Transverse colon (tissue), 4 donors: ENCODE measurements at regions of chr4 and their contacts with region 1.

Region 1: DNA sequence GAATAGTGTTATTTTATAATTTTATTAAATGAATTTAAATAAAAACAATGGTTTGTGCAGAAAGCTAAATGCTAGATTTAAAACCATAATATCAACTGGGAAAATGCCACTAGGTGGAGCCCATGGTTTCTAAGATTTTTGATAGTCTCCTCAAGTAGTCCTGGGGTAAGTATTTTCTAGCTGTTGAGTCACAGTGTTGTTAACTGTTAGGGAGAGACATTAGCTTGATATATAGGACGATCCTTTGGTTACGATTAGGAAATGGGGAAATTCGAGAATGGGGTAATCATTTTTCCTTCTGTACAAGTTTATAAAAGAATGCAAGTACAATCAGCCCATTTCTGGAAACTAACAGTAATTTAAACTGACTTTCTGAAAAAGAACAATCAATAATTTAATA is 378.4 kb downstream of the ANKRD50 start:
- DNase-seq: no peak
- H3K4me3 ChIP-seq: no peak overlapping the region
- H3K27ac ChIP-seq: no peak overlapping the region
- H3K4me1 ChIP-seq: peaks cover 0 to 3% (median 2%) of the 10 kb centered on the region in 4 donors
- H3K27me3 ChIP-seq: no peaks in the 10 kb centered on the region
- CTCF ChIP-seq: peak; percentile 49 to 58 (median 56)
- EP300 ChIP-seq: no peak
- POLR2A ChIP-seq: no peak

Region 2: DNA sequence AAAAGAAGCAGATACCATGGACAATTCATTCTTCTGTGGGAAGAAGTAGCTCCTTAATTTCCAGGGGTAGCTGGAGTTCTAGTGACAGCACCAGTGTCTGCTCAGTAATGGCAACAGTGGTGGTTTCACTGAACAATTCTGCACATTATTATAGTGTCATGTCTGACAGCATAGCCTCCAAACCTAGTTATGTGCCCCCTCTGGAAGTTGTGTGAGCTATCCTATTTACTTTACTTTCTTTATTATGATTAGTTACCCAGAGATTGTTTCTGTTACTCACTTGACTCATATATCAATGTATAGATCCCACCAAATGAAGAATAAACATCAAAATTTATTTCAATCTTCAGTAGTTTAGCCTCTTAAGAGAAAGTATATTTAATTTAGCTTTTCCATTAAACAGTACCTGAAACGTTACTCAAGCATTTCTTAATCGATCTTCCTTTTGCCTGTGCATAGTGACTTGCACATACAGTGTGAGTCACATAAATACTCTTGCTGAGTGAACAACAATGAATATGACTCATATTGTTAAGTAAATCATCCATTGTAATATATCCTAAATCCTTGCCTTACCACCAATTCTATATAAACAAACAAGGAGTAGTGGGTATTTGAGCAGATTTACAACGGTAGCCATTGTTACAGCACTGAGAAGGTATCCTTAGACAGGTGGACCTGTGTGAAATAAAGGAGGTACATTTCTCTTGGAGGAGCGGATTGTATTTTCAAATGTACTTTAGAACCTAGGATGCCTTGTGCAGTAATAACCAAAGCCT is 156.3 kb before region 1 on chr4:
- in situ Hi-C with region 1: no loop called
- intact Hi-C with region 1: no loop called
- DNase-seq: no peak
- H3K4me3 ChIP-seq: no peak overlapping the region
- H3K27ac ChIP-seq: no peak overlapping the region
- H3K4me1 ChIP-seq: no peaks in the 10 kb centered on the region
- H3K27me3 ChIP-seq: no peaks in the 10 kb centered on the region
- CTCF ChIP-seq: no peak
- EP300 ChIP-seq: no peak
- POLR2A ChIP-seq: no peak

Region 3: GRCh38 chr4:124712372-124713184 is 378.5 kb after region 1 on chr4 and contains the start of gene ANKRD50:
- in situ Hi-C with region 1: loop called in 1 of 4 experiments (anchors 25 kb)
- intact Hi-C with region 1: no loop called
- DNase-seq: peak; percentile 86
- H3K4me3 ChIP-seq: peak within 1 kb of the TSS; percentile 76 to 83 (median 76)
- H3K27ac ChIP-seq: peak within 1 kb of the TSS; percentile 91 to 97 (median 95)
- H3K4me1 ChIP-seq: peaks cover 5 to 33% (median 18%) of the 10 kb centered on the region in 4 donors
- H3K27me3 ChIP-seq: no peaks in the 10 kb centered on the region
- CTCF ChIP-seq: no peak
- EP300 ChIP-seq: no peak
- POLR2A ChIP-seq: peak; percentile 64
- total RNA-seq, gene ANKRD50: 11.9 to 31.8 (median 13.9) TPM

Region 4: GRCh38 chr4:125244848-125245450 is 910.8 kb after region 1 on chr4:
- in situ Hi-C with region 1: loop called in 1 of 4 experiments (anchors 25 kb)
- intact Hi-C with region 1: no loop called
- DNase-seq: no peak
- H3K4me3 ChIP-seq: no peak overlapping the region
- H3K27ac ChIP-seq: no peak overlapping the region
- H3K4me1 ChIP-seq: no peaks in the 10 kb centered on the region
- H3K27me3 ChIP-seq: no peaks in the 10 kb centered on the region
- CTCF ChIP-seq: peak in 2 of 5 experiments; percentile 11 to 28
- EP300 ChIP-seq: no peak
- POLR2A ChIP-seq: no peak

Region 5: DNA sequence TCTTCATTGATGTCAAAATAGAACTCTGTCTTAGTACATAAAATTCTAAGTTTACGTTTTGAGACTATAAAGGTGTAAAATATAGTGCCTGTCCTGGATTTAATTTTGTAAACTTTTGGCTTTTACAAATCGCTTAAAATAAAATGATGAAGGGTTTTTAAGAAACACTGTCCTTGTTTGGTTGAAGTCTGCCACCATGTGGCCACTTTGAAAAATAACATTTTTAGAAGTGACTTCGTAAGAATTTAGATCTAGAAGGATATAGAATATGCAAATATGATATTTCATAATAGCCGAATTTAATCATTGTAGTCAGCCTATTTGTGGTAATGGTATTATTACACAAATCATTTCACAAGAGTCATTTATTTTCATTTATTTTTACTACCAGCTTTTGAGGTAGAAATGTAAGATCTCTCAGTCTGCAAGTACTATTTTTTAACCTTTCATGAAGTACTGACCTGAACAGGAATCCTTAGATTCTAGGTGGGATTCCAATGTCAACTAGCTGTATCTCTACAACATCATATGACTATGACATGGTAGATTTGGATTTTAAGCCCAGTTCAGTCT is 949.7 kb after region 1 on chr4:
- in situ Hi-C with region 1: loop called in 1 of 4 experiments (anchors 25 kb)
- intact Hi-C with region 1: no loop called
- DNase-seq: no peak
- H3K4me3 ChIP-seq: no peak overlapping the region
- H3K27ac ChIP-seq: no peak overlapping the region
- H3K4me1 ChIP-seq: no peaks in the 10 kb centered on the region
- H3K27me3 ChIP-seq: no peaks in the 10 kb centered on the region
- CTCF ChIP-seq: peak; percentile 24 to 52 (median 47)
- EP300 ChIP-seq: no peak
- POLR2A ChIP-seq: no peak